Activated CD4-positive, alpha-beta T cell treated with anti-CD3 and anti-CD28 coated beads, Interleukin-2, amount 10 ng/mL, durations not matched to agents 24 days and 14 days (primary cell): ENCODE measurements at regions of chr9 and their contacts with region 1.

Region 1: GRCh38 chr9:19286634-19287200 is 56.2 kb downstream of the DENND4C start:
- DNase-seq: no peak
- H3K4me3 Mint-ChIP-seq: no peak overlapping the region
- H3K27ac Mint-ChIP-seq: no peak overlapping the region
- H3K4me1 Mint-ChIP-seq: peaks cover 1% of the 10 kb centered on the region
- H3K27me3 Mint-ChIP-seq: no peaks in the 10 kb centered on the region

Region 2: GRCh38 chr9:19246891-19247290 is 39.8 kb before region 1 on chr9:
- intact Hi-C with region 1: loop called (anchors 5 kb)
- DNase-seq: no peak
- H3K4me3 Mint-ChIP-seq: no peak overlapping the region
- H3K27ac Mint-ChIP-seq: no peak overlapping the region
- H3K4me1 Mint-ChIP-seq: peaks cover 9% of the 10 kb centered on the region
- H3K27me3 Mint-ChIP-seq: no peaks in the 10 kb centered on the region

Region 3: GRCh38 chr9:19336166-19336565 is 49.4 kb after region 1 on chr9:
- intact Hi-C with region 1: loop called (anchors 5 kb)
- DNase-seq: no peak
- H3K4me3 Mint-ChIP-seq: no peak overlapping the region
- H3K27ac Mint-ChIP-seq: no peak overlapping the region
- H3K4me1 Mint-ChIP-seq: no peaks in the 10 kb centered on the region
- H3K27me3 Mint-ChIP-seq: no peaks in the 10 kb centered on the region

Region 4: GRCh38 chr9:19456996-19457692 is 170.4 kb after region 1 on chr9:
- intact Hi-C with region 1: no loop called
- DNase-seq: peak; percentile 91
- H3K4me3 Mint-ChIP-seq: peak overlapping the region; percentile 59
- H3K27ac Mint-ChIP-seq: no peak overlapping the region
- H3K4me1 Mint-ChIP-seq: peaks cover 10% of the 10 kb centered on the region
- H3K27me3 Mint-ChIP-seq: peaks cover 3% of the 10 kb centered on the region